Naive thymus-derived CD4-positive, alpha-beta T cell (primary cell): ENCODE measurements at regions of chr4 and their contacts with region 1.

Region 1: GRCh38 chr4:54683616-54684346 is 26.0 kb downstream of the KIT start:
- DNase-seq: peak; percentile 21 to 65 (median 45)
- ATAC-seq: peak; percentile 65
- H3K4me3 ChIP-seq: no peak overlapping the region
- H3K4me3 Mint-ChIP-seq: peak overlapping the region; percentile 44 to 85 (median 69)
- H3K27ac ChIP-seq: no peak overlapping the region
- H3K27ac Mint-ChIP-seq: peak overlapping the region in 8 of 9 donors; percentile 10 to 92 (median 80)
- H3K4me1 ChIP-seq: peaks cover 0 to 7% of the 10 kb centered on the region in 2 donors
- H3K4me1 Mint-ChIP-seq: peaks cover 15 to 36% (median 29%) of the 10 kb centered on the region in 7 donors
- H3K27me3 ChIP-seq: no peaks in the 10 kb centered on the region
- H3K27me3 Mint-ChIP-seq: no peaks in the 10 kb centered on the region

Region 2: GRCh38 chr4:54322818-54323417 is 360.9 kb before region 1 on chr4:
- CTCF ChIA-PET with region 1: interaction called, 4 read pairs
- POLR2A ChIA-PET with region 1: no interaction called
- intact Hi-C with region 1: loop called (anchors 5 to 10 kb)
- DNase-seq: peak in 8 of 9 donors; percentile 8 to 52 (median 42)
- ATAC-seq: peak; percentile 54
- H3K4me3 ChIP-seq: no peak overlapping the region
- H3K4me3 Mint-ChIP-seq: no peak overlapping the region
- H3K27ac ChIP-seq: no peak overlapping the region
- H3K27ac Mint-ChIP-seq: no peak overlapping the region
- H3K4me1 ChIP-seq: no peaks in the 10 kb centered on the region
- H3K4me1 Mint-ChIP-seq: peaks cover 0 to 12% (median 0%) of the 10 kb centered on the region in 7 donors
- H3K27me3 ChIP-seq: no peaks in the 10 kb centered on the region
- H3K27me3 Mint-ChIP-seq: peaks cover 0 to 3% (median 0%) of the 10 kb centered on the region in 5 donors

Region 3: GRCh38 chr4:54961357-54961975 is 277.7 kb after region 1 on chr4:
- CTCF ChIA-PET with region 1: interaction called, 67 read pairs
- POLR2A ChIA-PET with region 1: interaction called, 3 read pairs
- intact Hi-C with region 1: loop called (anchors 1 kb)
- DNase-seq: peak in 4 of 9 donors; percentile 29 to 48 (median 40)
- ATAC-seq: peak; percentile 46
- H3K4me3 ChIP-seq: no peak overlapping the region
- H3K4me3 Mint-ChIP-seq: no peak overlapping the region
- H3K27ac ChIP-seq: no peak overlapping the region
- H3K27ac Mint-ChIP-seq: peak overlapping the region in 2 of 9 donors; percentile 61 to 62
- H3K4me1 ChIP-seq: peaks cover 0 to 8% of the 10 kb centered on the region in 2 donors
- H3K4me1 Mint-ChIP-seq: peaks cover 5 to 37% (median 11%) of the 10 kb centered on the region in 7 donors
- H3K27me3 ChIP-seq: no peaks in the 10 kb centered on the region
- H3K27me3 Mint-ChIP-seq: peaks cover 0 to 3% (median 0%) of the 10 kb centered on the region in 5 donors

Region 4: GRCh38 chr4:55312489-55313101 is 628.8 kb after region 1 on chr4:
- CTCF ChIA-PET with region 1: no interaction called
- POLR2A ChIA-PET with region 1: no interaction called
- intact Hi-C with region 1: loop called in 1 of 2 experiments (anchors 10 kb)
- DNase-seq: peak in 7 of 9 donors; percentile 6 to 34 (median 30)
- ATAC-seq: peak; percentile 68
- H3K4me3 ChIP-seq: no peak overlapping the region
- H3K4me3 Mint-ChIP-seq: no peak overlapping the region
- H3K27ac ChIP-seq: no peak overlapping the region
- H3K27ac Mint-ChIP-seq: no peak overlapping the region
- H3K4me1 ChIP-seq: no peaks in the 10 kb centered on the region
- H3K4me1 Mint-ChIP-seq: peaks cover 0 to 4% (median 0%) of the 10 kb centered on the region in 7 donors
- H3K27me3 ChIP-seq: no peaks in the 10 kb centered on the region
- H3K27me3 Mint-ChIP-seq: peaks cover 0 to 7% (median 0%) of the 10 kb centered on the region in 5 donors

Region 5: GRCh38 chr4:55321707-55322264 is 638.0 kb after region 1 on chr4:
- CTCF ChIA-PET with region 1: no interaction called
- POLR2A ChIA-PET with region 1: no interaction called
- intact Hi-C with region 1: loop called (anchors 5 to 10 kb)
- DNase-seq: peak in 6 of 9 donors; percentile 9 to 42 (median 18)
- ATAC-seq: no peak
- H3K4me3 ChIP-seq: no peak overlapping the region
- H3K4me3 Mint-ChIP-seq: no peak overlapping the region
- H3K27ac ChIP-seq: no peak overlapping the region
- H3K27ac Mint-ChIP-seq: no peak overlapping the region
- H3K4me1 ChIP-seq: peaks cover 0 to 7% of the 10 kb centered on the region in 2 donors
- H3K4me1 Mint-ChIP-seq: peaks cover 12 to 30% (median 22%) of the 10 kb centered on the region in 7 donors
- H3K27me3 ChIP-seq: no peaks in the 10 kb centered on the region
- H3K27me3 Mint-ChIP-seq: no peaks in the 10 kb centered on the region

Region 6: DNA sequence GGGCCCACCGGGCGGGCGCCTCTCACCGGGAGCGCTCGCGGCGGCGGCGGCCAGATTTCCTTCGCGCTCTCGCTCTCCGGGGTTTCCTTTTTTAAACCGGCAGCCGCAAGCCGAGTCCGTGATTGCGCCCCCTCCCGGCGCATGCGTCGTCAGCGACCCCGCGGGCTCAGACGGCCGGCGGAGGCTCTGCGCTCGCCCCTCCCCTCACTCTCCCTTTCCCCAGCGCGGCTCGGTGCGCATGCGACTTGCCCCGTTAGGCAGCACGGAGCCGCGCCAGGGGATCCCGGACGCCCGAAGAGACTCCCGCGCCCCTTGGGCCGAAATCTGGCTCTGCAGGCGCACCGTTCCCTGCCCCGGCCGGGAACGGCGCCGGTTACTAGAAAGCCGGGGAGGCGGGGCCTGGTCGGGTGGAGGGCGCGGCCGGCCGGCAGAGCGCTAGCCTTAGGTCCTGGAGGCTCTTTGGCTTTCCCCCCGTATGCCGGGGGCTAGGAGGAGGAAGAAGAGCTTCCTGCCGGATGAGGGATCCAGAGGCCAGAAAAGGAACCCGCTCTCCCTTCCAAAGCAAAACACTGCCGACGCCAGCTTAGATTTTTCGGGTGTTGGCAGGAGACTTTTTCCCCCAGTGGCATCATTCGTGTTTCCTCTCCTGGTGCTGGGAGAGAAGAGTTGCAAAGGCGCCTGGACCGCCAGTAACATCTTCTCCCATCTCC is 863.1 kb after region 1 on chr4 and contains the start of gene CLOCK:
- CTCF ChIA-PET with region 1: no interaction called
- POLR2A ChIA-PET with region 1: no interaction called
- intact Hi-C with region 1: loop called in 1 of 2 experiments (anchors 10 kb)
- DNase-seq: peak; percentile 79 to 87 (median 83)
- ATAC-seq: peak; percentile 82
- H3K4me3 ChIP-seq: peak within 1 kb of the TSS; percentile 82
- H3K4me3 Mint-ChIP-seq: peak within 1 kb of the TSS; percentile 88 to 96 (median 94)
- H3K27ac ChIP-seq: peak within 1 kb of the TSS; percentile 84
- H3K27ac Mint-ChIP-seq: peak within 1 kb of the TSS; percentile 87 to 92 (median 90)
- H3K4me1 ChIP-seq: peaks cover 5 to 8% of the 10 kb centered on the region in 2 donors
- H3K4me1 Mint-ChIP-seq: peaks cover 21 to 57% (median 40%) of the 10 kb centered on the region in 7 donors
- H3K27me3 ChIP-seq: no peaks in the 10 kb centered on the region
- H3K27me3 Mint-ChIP-seq: peaks cover 0 to 29% (median 0%) of the 10 kb centered on the region in 5 donors
- total RNA-seq, gene CLOCK: 7.9 to 12.6 (median 8.9) TPM